Lower leg skin (tissue), 4 donors: ENCODE measurements at regions of chr11 and their contacts with region 1.

Region 1: GRCh38 chr11:78564490-78565467 is 9.9 kb downstream of the NARS2 start:
- DNase-seq: peak in 1 of 2 donors; percentile 57
- H3K4me3 ChIP-seq: no peak overlapping the region
- CTCF ChIP-seq: peak in 1 of 3 donors; percentile 45
- POLR2A ChIP-seq: no peak

Region 2: DNA sequence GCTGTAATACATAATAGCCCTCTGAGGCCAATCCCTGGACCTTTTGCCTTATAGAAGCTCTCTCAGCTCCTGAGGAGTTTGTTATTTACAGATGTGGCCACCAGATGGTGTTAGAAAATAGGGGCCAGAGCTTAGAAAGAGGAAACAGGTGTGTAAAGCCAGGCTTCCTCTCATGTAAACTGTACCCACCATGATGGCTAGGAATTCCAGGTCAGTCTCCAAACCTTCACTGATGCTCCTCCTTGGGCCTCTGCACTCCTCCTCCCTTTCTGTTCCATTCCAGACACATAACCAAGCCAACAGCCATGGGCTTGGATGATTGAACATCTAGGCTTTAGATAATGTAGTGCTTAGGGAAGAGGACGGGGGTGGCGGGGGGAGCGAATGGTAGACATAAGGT is 336.3 kb before region 1 on chr11:
- intact Hi-C with region 1: loop called (anchors 10 kb)
- DNase-seq: no peak
- H3K4me3 ChIP-seq: no peak overlapping the region
- CTCF ChIP-seq: no peak
- POLR2A ChIP-seq: no peak

Region 3: GRCh38 chr11:78416305-78417178 is 148.2 kb before region 1 on chr11:
- intact Hi-C with region 1: loop called (anchors 10 kb)
- DNase-seq: peak; percentile 87 to 98
- H3K4me3 ChIP-seq: peak overlapping the region; percentile 73
- CTCF ChIP-seq: no peak
- POLR2A ChIP-seq: peak in 1 of 2 donors; percentile 11